Endothelial cell of umbilical vein (primary cell): ENCODE measurements at regions of chr15 and their contacts with region 1.

Region 1: GRCh38 chr15:51132384-51133139 is 37.9 kb upstream of the TNFAIP8L3 start:
- DNase-seq: peak; percentile 97
- H3K4me3 ChIP-seq: no peak overlapping the region
- H3K27ac ChIP-seq: peak overlapping the region; percentile 91
- H3K4me1 ChIP-seq: peaks cover 26% of the 10 kb centered on the region
- H3K27me3 ChIP-seq: no peaks in the 10 kb centered on the region
- CTCF ChIP-seq: peak; percentile 95 to 99
- POLR2A ChIP-seq: peak; percentile 33

Region 2: DNA sequence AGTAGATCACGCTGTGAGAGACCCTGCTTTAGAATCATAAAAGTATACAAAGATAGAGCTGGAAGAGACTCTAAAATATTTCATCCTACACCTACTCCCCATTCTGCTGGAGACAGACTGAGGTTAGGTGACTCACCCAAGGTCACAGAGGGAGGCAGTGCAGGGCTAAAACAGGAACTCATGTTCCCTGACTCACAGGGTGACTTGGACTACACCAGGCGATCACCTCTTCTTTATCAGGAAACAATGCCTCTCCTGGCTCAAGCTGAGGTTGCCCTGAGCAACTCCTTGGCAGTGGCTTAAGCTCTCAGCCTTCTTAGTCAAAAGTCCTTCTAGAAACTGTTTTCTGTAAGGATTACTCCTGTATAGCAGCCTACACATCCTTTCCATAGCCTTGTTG is 11.4 kb before region 1 on chr15:
- CTCF ChIA-PET with region 1: interaction called, 18 read pairs
- POLR2A ChIA-PET with region 1: interaction called, 5 read pairs
- dilution Hi-C with region 1: no loop called
- intact Hi-C with region 1: loop called (anchors 1 kb)
- DNase-seq: peak; percentile 98
- H3K4me3 ChIP-seq: no peak overlapping the region
- H3K27ac ChIP-seq: peak overlapping the region; percentile 85
- H3K4me1 ChIP-seq: peaks cover 25% of the 10 kb centered on the region
- H3K27me3 ChIP-seq: no peaks in the 10 kb centered on the region
- CTCF ChIP-seq: no peak
- POLR2A ChIP-seq: peak; percentile 54

Region 3: GRCh38 chr15:51155891-51156290 is 23.3 kb after region 1 on chr15:
- CTCF ChIA-PET with region 1: interaction called, 15 read pairs
- POLR2A ChIA-PET with region 1: no interaction called
- dilution Hi-C with region 1: no loop called
- intact Hi-C with region 1: no loop called
- DNase-seq: peak; percentile 52
- H3K4me3 ChIP-seq: no peak overlapping the region
- H3K27ac ChIP-seq: no peak overlapping the region
- H3K4me1 ChIP-seq: no peaks in the 10 kb centered on the region
- H3K27me3 ChIP-seq: peaks cover 2 to 4% of the 10 kb centered on the region in 2 experiments
- CTCF ChIP-seq: no peak
- POLR2A ChIP-seq: no peak

Region 4: DNA sequence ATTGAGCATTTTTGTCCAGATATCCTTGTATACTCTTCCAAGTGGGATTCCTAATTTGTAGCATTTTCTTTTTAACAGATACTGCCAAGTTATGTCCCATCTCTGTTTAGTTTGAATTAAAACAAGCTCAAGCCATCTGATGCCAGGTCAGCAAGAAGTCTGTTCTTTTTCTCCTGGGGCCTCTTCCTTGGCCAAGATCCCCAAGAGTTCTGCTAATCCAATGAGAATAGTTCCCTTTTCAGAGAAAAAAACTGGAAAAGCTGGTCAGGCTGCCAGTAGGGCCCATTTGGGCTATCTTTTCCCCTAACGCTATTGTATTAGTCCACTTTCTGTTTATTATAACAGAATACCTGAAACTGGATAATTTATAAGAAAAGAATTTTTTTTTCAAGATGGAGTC is 238.8 kb after region 1 on chr15:
- CTCF ChIA-PET with region 1: no interaction called
- POLR2A ChIA-PET with region 1: no interaction called
- dilution Hi-C with region 1: no loop called
- intact Hi-C with region 1: no loop called
- DNase-seq: no peak
- H3K4me3 ChIP-seq: no peak overlapping the region
- H3K27ac ChIP-seq: no peak overlapping the region
- H3K4me1 ChIP-seq: no peaks in the 10 kb centered on the region
- H3K27me3 ChIP-seq: peaks cover 62 to 69% of the 10 kb centered on the region in 2 experiments
- CTCF ChIP-seq: no peak
- POLR2A ChIP-seq: no peak